HCT116 (cell line): ENCODE measurements at regions of chr2 and their contacts with region 1.

Region 1: DNA sequence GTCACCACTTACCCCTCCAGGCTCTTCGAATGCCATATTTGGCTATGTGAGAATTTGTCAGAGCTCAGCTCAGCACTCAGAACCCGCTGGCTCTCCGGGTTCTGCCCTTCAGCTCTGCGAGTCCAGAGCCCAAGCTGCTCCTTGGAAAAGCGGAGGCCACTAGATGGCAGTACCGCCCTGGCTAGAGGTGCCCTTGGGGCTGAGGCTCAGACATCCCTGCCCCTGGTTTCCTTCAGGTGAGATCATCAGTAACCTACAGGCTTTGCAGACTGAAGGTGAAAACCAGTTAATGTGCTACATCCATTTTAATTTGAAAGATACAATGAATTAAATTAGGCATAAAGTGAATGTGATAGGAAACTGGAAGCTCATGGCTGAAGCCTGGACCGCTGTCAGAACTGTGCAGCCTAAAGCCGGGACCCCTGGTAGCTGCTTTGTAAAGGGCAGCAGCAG is 285.6 kb downstream of the AGAP1 start:
- DNase-seq: peak; percentile 37
- ATAC-seq: peak; percentile 99
- H3K4me3 ChIP-seq: no peak overlapping the region
- H3K27ac ChIP-seq: no peak overlapping the region
- H3K4me1 ChIP-seq: no peaks in the 10 kb centered on the region
- H3K27me3 ChIP-seq: no peaks in the 10 kb centered on the region
- CTCF ChIP-seq: peak; percentile 82 to 91 (median 89)
- POLR2A ChIP-seq: no peak
- RAD21 ChIP-seq: peak; percentile 92

Region 2: GRCh38 chr2:235754352-235755207 is 24.9 kb before region 1 on chr2:
- CTCF ChIA-PET with region 1: no interaction called
- POLR2A ChIA-PET with region 1: no interaction called
- RAD21 ChIA-PET with region 1: no interaction called
- intact Hi-C with region 1: no loop called
- DNase-seq: no peak
- ATAC-seq: no peak
- H3K4me3 ChIP-seq: no peak overlapping the region
- H3K27ac ChIP-seq: no peak overlapping the region
- H3K4me1 ChIP-seq: no peaks in the 10 kb centered on the region
- H3K27me3 ChIP-seq: no peaks in the 10 kb centered on the region
- CTCF ChIP-seq: no peak
- POLR2A ChIP-seq: no peak
- RAD21 ChIP-seq: no peak

Region 3: GRCh38 chr2:235766278-235766677 is 13.2 kb before region 1 on chr2:
- CTCF ChIA-PET with region 1: interaction called, 25 read pairs
- POLR2A ChIA-PET with region 1: no interaction called
- RAD21 ChIA-PET with region 1: no interaction called
- intact Hi-C with region 1: no loop called
- DNase-seq: peak; percentile 62
- ATAC-seq: peak; percentile 88
- H3K4me3 ChIP-seq: no peak overlapping the region
- H3K27ac ChIP-seq: no peak overlapping the region
- H3K4me1 ChIP-seq: peaks cover 0 to 18% of the 10 kb centered on the region in 2 experiments; a peak in 2 of 4 replicates
- H3K27me3 ChIP-seq: no peaks in the 10 kb centered on the region
- CTCF ChIP-seq: peak; percentile 69 to 91 (median 80); a peak in 5 of 6 replicates
- POLR2A ChIP-seq: no peak
- RAD21 ChIP-seq: peak; percentile 74

Region 4: DNA sequence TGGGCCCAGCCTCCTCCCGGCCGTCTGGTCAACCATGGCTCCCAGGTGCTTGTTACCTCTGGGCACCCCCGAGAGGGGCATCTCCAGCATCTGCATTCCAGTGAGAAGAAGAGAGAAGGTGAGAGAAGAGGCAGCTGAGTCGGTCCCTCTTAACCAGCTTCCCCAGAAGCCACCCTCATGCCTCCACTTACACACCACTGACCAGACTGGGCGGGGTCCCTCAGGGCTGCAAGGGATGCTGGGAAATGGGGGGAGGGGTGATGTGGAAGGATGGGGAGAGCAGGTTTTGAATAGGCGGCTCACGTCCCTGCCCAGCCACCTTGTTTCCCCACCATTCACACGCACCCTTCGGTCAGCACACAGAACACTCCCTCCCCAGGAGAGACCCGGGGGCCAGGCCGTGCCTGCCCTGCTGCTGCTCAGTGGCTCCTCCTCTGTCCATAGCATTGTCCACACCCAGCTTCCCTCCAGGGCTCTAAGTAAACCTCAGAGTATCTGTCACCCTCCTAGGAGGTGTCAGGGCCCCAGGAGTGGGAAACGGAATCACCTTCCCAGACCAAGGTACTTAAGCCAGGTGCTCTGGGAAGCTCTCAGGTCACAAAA is 354.0 kb after region 1 on chr2:
- CTCF ChIA-PET with region 1: no interaction called
- POLR2A ChIA-PET with region 1: no interaction called
- RAD21 ChIA-PET with region 1: no interaction called
- intact Hi-C with region 1: no loop called
- DNase-seq: no peak
- ATAC-seq: peak; percentile 82
- H3K4me3 ChIP-seq: no peak overlapping the region
- H3K27ac ChIP-seq: no peak overlapping the region
- H3K4me1 ChIP-seq: no peaks in the 10 kb centered on the region
- H3K27me3 ChIP-seq: no peaks in the 10 kb centered on the region
- CTCF ChIP-seq: peak in 2 of 3 experiments; percentile 29 to 33; a peak in 3 of 6 replicates
- POLR2A ChIP-seq: no peak
- RAD21 ChIP-seq: no peak

Region 5: DNA sequence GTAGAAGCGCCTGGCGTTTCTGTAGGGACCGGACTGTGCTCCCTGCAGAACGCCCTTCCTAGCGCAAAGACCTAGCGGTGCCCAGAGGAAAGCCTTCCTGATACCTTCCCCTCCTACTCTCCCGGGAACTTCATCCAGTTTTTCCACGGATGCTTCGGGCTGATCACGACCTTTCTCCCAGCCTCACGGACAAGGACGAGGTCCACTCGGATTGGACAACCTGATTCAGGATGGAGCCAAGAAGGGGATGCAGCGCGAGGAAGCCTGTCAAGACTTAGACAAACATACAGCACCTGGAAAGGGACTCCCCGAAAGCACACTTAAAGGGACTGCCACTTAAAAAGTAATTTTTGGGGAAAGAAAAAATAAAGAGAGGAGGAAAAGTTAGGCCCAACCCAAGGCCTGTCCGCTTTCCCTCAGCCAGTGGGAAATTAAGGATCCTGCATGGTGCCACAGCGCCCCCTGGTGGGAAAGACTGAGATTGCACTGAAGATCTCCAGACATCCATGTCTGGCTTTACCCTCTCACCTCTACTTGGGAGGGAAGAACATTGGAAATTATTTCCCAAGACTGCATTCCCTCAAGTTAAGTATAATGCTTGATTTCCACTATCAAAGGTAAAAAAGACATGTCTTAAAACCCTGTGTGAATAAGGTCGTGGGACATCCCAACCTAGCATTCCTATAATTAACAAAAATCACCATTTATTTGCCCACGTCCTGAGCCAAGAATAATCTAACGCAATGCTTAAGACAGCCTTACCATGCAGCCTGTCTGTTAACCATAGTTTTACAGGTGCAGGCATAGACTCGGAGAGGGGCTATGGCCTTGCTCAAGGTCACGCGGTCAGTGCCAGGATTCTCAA is 1292.8 kb after region 1 on chr2:
- CTCF ChIA-PET with region 1: no interaction called
- POLR2A ChIA-PET with region 1: no interaction called
- RAD21 ChIA-PET with region 1: no interaction called
- intact Hi-C with region 1: loop called (anchors 2 kb)
- DNase-seq: peak; percentile 19
- ATAC-seq: peak; percentile 93
- H3K4me3 ChIP-seq: no peak overlapping the region
- H3K27ac ChIP-seq: no peak overlapping the region
- H3K4me1 ChIP-seq: peaks cover 0 to 5% of the 10 kb centered on the region in 2 experiments; a peak in 1 of 4 replicates
- H3K27me3 ChIP-seq: no peaks in the 10 kb centered on the region
- CTCF ChIP-seq: peak; percentile 52 to 98 (median 97)
- POLR2A ChIP-seq: no peak
- RAD21 ChIP-seq: peak; percentile 82